Breast epithelium (tissue), 4 donors: ENCODE measurements at regions of chrX and their contacts with region 1.

Region 1: DNA sequence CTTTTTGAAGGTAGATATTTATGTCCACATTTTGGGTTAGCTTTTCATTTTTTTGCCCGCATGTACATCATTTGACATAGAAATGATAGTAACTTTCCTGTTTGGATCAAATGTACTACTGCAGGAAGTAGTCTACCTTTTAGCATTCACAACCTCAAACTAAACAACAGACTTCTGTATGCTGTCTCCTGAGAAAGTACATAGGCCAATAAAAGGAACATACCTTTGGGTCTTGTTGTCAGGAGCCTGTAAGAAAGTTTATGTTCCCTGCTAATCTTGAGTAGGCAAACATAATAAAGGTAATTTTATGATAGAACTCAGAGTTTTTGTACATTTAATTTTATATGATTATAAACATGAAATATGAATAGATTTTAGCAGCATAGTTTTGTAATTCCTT is 54.2 kb downstream of the STAG2 start:
- DNase-seq: no peak
- H3K4me3 ChIP-seq: no peak overlapping the region
- H3K27ac ChIP-seq: no peak overlapping the region
- H3K4me1 ChIP-seq: no peaks in the 10 kb centered on the region
- H3K27me3 ChIP-seq: peaks cover 0 to 8% of the 10 kb centered on the region in 2 donors
- CTCF ChIP-seq: no peak
- POLR2A ChIP-seq: no peak

Region 2: DNA sequence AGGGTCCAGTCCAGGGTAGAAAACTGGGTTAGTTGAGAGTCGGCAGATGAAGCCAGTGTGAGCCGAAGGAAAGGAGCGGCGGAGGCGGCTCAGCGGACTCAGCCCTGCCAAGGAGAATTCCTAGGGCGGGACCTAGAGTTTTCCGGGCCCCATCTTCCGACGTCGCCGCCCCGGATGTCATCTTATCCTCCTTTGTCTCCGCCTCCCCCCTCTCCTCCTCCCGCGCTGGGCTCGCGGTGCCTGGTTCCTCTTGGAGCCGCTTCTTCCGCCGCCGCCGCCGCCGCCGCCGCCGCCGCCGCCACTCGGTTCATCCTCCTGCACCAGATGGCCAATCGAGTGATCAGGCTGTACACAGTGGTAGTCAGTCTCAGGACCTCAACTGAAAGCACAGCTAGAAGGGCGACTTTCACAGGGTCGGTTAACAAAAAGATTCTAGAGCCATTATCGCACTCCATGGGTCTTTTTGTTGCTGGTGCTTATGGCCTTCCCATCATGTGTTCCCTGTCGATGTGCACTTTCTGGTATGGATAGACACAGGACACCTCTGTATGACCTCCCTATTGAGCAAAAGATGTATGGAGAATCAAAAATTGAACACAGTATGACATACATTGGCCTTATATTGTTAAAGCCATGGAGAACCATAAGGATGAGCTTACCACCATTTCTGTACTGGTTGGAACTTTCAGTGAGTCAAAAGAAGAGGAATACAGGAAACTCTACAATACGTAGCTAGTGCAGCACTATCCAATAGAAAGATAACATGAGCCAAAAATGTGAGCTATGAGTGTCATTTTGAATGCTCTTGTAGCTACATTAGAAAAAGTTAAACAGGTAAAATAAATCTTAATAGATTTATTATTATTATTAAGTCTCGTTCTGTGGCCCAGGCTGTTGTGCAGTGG is 250.5 kb before region 1 on chrX:
- intact Hi-C with region 1: no loop called
- DNase-seq: peak; percentile 77 to 78
- H3K4me3 ChIP-seq: peak overlapping the region; percentile 23 to 56 (median 40)
- H3K27ac ChIP-seq: peak overlapping the region; percentile 20 to 73
- H3K4me1 ChIP-seq: no peaks in the 10 kb centered on the region
- H3K27me3 ChIP-seq: no peaks in the 10 kb centered on the region
- CTCF ChIP-seq: no peak
- POLR2A ChIP-seq: no peak

Region 3: DNA sequence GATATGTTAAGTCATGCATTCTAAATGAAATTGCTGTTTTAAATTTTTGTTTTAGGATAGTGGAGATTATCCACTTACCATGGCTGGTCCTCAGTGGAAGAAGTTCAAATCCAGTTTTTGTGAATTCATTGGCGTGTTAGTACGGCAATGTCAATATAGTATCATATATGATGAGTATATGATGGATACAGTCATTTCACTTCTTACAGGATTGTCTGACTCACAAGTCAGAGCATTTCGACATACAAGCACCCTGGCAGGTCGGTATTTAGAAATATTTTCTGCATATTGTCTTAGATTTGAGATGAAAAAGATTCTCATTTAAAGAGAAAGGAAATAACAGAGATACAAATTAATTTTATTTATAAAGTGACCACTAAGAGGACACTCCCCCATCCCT is 29.4 kb after region 1 on chrX:
- intact Hi-C with region 1: loop called (anchors 2 kb)
- DNase-seq: no peak
- H3K4me3 ChIP-seq: no peak overlapping the region
- H3K27ac ChIP-seq: no peak overlapping the region
- H3K4me1 ChIP-seq: no peaks in the 10 kb centered on the region
- H3K27me3 ChIP-seq: no peaks in the 10 kb centered on the region
- CTCF ChIP-seq: no peak
- POLR2A ChIP-seq: no peak